ENCODE measurements at regions of chr17 and their contacts with region 1.

Region 1: DNA sequence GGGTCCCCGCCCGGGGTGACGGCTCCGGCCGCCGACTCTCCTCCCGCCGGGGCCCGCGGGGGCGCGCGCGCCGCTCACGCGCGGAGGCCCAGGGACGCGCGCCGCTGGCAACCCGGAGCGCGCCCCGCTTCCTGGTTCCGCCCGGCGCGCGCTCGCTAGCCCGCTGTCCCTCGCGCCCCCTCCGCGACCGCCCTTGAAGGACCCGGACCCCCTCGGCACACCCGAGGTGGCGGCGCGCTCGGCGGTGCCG is at the start of gene STAT5B:
- DNase-seq: peak; percentile 72 to 89 (median 80)
- ATAC-seq: peak; percentile 40 to 90 (median 83)
- H3K4me3 ChIP-seq: peak within 1 kb of the TSS; percentile 70 to 99 (median 90)
- H3K27ac ChIP-seq: peak within 1 kb of the TSS; percentile 72 to 94 (median 90)
- H3K4me1 ChIP-seq: peaks cover 0 to 50% (median 25%) of the 10 kb centered on the region in 12 donors
- H3K27me3 ChIP-seq: no peaks in the 10 kb centered on the region
- CTCF ChIP-seq: no peak
- POLR2A ChIP-seq: peak in 1 of 2 donors; percentile 45
- total RNA-seq, gene STAT5B: 26.1 to 51.9 (median 32.4) TPM

Region 2: DNA sequence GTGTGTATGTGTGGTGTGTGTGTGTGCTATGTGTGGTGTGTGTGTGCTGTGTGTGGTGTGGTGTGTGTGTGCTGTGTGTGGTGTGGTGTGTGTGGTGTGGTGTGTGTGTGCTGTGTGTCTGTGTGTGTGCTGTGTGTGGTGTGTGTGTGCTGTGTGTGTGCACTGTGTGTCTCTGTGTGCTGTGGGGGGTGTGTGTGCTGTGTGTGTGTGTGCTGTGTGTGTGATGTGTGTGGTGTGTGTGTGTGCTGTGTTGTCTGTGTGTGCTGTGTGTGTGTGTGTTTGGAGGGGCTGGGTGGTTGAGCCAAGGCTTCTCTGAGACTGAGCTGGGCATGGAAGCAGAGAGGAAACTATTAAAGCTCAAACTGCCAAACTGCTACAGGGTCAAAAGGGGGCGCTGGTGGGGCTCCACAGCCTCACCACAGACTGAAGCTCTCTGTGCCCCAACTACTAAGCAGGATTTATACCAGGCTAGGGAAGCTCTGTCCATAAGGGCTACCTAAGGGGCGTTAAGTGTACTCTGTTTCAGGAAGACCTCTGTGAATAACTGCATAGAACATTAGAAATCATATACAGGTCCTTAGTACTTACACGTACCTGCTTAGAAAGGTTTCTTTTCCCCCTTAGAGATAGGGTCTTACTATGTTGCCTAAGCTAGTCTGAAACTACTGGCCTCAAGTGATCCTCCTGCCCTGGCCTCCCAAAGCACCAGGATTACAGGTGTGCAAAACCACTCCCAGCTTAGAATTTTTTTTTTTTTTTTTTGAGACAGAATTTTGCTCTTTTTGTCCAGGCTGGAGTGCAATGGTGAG is 54.1 kb before region 1 on chr17:
- intact Hi-C with region 1: loop called in 3 of 10 experiments (anchors 5 to 10 kb)
- DNase-seq: peak in 1 of 5 donors; percentile 34
- ATAC-seq: peak in 3 of 4 donors; percentile 60 to 65 (median 63)
- H3K4me3 ChIP-seq: no peak overlapping the region
- H3K27ac ChIP-seq: no peak overlapping the region
- H3K4me1 ChIP-seq: peaks cover 0 to 6% (median 2%) of the 10 kb centered on the region in 12 donors
- H3K27me3 ChIP-seq: no peaks in the 10 kb centered on the region
- CTCF ChIP-seq: peak; percentile 10 to 52 (median 41)
- POLR2A ChIP-seq: no peak

Region 3: GRCh38 chr17:42227849-42228615 is 48.3 kb before region 1 on chr17:
- intact Hi-C with region 1: loop called in 4 of 10 experiments (anchors 5 to 10 kb)
- DNase-seq: no peak
- ATAC-seq: peak in 1 of 4 donors; percentile 48
- H3K4me3 ChIP-seq: no peak overlapping the region
- H3K27ac ChIP-seq: peak overlapping the region in 9 of 12 donors; percentile 5 to 69 (median 45)
- H3K4me1 ChIP-seq: peaks cover 0 to 23% (median 16%) of the 10 kb centered on the region in 12 donors
- H3K27me3 ChIP-seq: no peaks in the 10 kb centered on the region
- CTCF ChIP-seq: no peak
- POLR2A ChIP-seq: no peak